ENCODE measurements at regions of chr10 and their contacts with region 1.

Region 1: DNA sequence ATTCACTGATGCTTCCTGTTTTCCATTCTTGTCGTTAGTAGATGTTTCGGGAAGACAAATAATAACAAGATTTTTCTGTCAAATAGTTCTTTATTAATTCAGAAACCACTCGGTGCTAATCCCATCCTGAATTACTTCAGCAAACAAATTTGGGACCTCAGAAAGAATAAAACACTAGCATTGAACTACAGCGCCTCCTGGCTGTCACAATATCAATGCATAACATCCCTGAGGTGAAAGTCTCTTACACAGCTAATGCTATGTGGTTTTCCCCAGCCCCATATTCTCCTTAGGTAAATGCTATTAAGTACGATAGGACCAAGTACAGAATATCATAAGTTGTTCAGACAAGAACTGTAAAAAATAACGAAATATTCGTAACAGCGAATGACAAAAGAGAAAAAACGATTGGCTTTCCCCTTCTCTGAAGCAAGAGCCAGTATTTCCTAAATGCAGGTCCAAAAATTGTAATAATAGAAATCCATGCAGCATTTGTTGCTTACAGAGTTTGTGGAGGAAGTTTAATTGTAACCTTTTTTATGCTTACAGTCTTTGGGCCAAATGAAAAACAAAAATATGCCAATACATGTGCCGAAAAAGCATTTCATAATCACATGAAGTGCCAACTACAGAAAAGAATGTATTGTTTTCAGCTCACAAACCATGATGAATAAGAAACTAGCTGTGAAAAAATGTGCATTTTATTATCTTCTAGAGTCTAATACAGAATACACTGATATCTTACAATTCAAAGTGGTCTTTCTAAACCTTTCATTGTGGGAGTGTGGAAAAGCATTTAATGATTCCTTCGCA is 47.3 kb downstream of the MYPN start:
- DNase-seq: peak; percentile 51 to 55 (median 53)
- H3K4me3 ChIP-seq: no peak overlapping the region
- H3K4me3 Mint-ChIP-seq: no peak overlapping the region
- H3K27ac ChIP-seq: no peak overlapping the region
- H3K27ac Mint-ChIP-seq: no peak overlapping the region
- H3K4me1 ChIP-seq: no peaks in the 10 kb centered on the region
- H3K4me1 Mint-ChIP-seq: peaks cover 0 to 1% (median 0%) of the 10 kb centered on the region in 4 donors
- H3K27me3 ChIP-seq: no peaks in the 10 kb centered on the region
- H3K27me3 Mint-ChIP-seq: peaks cover 0 to 7% of the 10 kb centered on the region in 2 donors

Region 2: DNA sequence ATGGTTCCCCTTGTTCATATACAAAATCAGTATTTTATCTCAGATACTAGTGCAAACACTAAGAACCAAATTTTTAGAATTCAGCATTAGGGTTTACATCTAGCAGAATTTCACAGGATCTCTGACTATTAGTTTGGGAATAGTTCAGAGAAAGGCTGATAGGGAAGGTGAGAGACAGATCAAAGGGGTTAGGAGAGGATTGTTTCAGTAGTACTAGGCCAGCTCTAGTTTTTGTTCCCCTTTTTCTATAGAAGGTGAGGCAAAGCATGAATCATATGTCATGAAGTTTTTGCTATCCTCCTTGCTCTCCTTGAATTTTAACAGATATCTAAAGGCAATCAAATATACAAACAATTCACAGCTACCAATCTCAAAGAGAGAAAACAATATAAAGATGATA is 434.5 kb before region 1 on chr10:
- CTCF ChIA-PET with region 1: no interaction called
- POLR2A ChIA-PET with region 1: no interaction called
- intact Hi-C with region 1: no loop called
- DNase-seq: no peak
- H3K4me3 ChIP-seq: no peak overlapping the region
- H3K4me3 Mint-ChIP-seq: no peak overlapping the region
- H3K27ac ChIP-seq: no peak overlapping the region
- H3K27ac Mint-ChIP-seq: no peak overlapping the region
- H3K4me1 ChIP-seq: no peaks in the 10 kb centered on the region
- H3K4me1 Mint-ChIP-seq: no peaks in the 10 kb centered on the region
- H3K27me3 ChIP-seq: no peaks in the 10 kb centered on the region
- H3K27me3 Mint-ChIP-seq: peaks cover 0 to 1% of the 10 kb centered on the region in 2 donors

Region 3: DNA sequence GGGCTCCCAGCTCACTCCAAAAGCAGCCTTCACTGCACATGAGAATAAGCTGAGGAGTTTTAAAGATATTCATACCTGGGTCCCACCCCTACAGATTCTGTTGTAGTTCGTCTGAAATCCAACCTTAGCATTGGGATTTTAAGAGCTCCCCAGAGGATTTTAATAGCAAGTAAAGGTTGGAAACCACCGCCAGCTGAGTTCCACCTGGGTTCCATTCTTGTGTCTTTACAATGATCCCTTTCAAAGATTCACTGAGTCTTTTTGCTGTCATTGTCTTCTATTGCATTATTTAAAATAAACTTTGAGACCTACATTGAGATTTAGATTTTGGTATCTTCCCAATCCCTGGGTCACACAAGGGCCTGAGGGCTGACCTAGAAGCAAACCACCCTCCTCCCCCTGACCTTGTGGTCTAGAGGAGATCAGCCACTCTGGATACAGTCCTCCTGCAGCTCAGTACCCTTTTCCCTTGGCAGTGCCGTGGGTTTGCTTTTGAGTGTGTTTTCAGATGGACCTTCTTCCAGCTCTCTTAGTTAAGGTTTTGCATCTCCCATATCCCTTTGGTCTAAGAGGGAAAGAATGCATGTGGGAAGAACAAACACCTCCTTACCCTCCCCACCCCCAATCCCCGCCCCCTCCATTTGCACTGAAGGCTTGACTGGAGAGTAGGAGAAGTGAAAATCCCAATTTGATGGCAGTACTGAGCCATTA is 294.7 kb before region 1 on chr10:
- CTCF ChIA-PET with region 1: interaction called, 190 read pairs
- POLR2A ChIA-PET with region 1: no interaction called
- intact Hi-C with region 1: no loop called
- DNase-seq: no peak
- H3K4me3 ChIP-seq: no peak overlapping the region
- H3K4me3 Mint-ChIP-seq: no peak overlapping the region
- H3K27ac ChIP-seq: no peak overlapping the region
- H3K27ac Mint-ChIP-seq: no peak overlapping the region
- H3K4me1 ChIP-seq: no peaks in the 10 kb centered on the region
- H3K4me1 Mint-ChIP-seq: no peaks in the 10 kb centered on the region
- H3K27me3 ChIP-seq: no peaks in the 10 kb centered on the region
- H3K27me3 Mint-ChIP-seq: no peaks in the 10 kb centered on the region